ENCODE measurements at regions of chr7 and their contacts with region 1.

Region 1: DNA sequence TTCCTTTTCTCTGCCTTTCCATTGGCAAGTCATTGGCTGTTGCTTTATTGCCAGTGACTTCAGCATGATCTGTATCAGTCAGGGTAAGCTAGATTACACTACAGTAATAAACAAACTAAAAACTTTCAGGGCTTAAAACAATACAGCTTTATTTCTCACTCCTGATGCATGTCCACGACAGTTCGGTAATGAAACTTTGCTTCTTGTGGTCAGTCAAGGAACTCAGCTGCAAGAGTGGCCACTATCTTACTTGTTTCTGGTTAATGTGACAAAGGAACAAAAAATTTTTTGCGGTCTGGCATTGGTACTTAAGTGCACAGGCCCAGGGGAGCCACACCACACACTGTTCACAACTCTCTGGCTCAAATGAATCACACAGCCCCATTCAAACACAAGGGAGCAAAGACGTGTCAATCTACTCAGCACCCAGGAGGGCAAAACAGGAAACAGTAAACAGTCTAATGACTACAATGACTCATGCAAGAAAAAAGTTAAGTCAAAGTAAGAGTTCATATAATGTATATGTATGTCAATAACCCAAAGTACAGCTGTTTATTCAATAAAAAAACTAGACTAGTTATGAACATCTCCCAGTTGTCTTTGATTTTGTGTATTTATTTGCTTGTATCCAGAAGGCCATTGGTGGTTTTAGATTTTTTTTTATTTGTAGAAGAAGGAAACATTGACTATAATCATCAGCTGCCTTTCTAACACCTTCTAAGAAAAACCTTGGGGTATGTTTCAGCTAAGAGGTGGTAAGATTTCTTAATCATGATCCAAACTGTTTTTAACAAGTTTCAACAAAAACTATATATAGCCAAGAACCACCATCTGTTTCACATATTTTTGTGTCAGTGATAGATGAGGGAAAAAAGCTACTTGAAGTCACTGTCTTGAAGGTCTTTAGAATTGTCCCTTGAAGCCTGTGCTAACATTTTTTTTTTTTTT is 134.4 kb upstream of the FAM3C start:
- DNase-seq: peak; percentile 89
- H3K4me3 Mint-ChIP-seq: peak overlapping the region; percentile 63
- H3K27ac Mint-ChIP-seq: peak overlapping the region; percentile 96
- H3K4me1 Mint-ChIP-seq: peaks cover 47% of the 10 kb centered on the region
- H3K27me3 Mint-ChIP-seq: no peaks in the 10 kb centered on the region

Region 2: DNA sequence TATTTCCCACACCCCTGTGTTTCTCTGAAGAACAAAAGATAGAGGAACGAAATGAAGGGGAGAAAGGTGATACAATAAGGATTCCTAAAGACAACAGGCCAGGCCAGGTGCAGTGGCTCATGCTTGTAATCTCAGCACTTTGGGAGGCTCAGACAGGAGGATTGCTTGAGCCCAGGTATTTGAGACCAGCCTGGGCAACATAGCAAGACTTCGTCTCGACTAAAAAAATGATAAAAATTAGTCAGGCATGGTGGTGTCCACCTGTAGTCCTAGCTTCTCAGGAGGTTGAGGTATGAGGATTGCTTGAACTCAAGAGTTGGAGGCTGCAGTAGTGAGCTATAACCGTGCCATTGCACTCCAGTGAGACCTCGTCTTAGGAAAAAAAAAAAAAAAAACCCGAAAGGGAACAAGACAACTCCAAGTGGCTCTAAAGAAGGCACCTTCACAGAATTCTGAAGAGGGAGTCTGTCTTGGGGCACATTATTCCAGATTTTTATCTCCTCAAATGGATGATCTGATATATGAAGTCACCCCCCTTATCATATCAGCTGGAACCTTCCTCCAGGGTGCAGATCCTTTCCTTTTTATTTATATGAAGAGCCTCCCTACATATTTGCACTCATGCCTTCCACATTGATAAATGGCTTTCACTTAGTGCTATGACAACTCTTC is 92.9 kb before region 1 on chr7:
- intact Hi-C with region 1: loop called (anchors 1 kb)
- DNase-seq: no peak
- H3K4me3 Mint-ChIP-seq: peak overlapping the region; percentile 73
- H3K27ac Mint-ChIP-seq: peak overlapping the region; percentile 92
- H3K4me1 Mint-ChIP-seq: peaks cover 36% of the 10 kb centered on the region
- H3K27me3 Mint-ChIP-seq: no peaks in the 10 kb centered on the region

Region 3: DNA sequence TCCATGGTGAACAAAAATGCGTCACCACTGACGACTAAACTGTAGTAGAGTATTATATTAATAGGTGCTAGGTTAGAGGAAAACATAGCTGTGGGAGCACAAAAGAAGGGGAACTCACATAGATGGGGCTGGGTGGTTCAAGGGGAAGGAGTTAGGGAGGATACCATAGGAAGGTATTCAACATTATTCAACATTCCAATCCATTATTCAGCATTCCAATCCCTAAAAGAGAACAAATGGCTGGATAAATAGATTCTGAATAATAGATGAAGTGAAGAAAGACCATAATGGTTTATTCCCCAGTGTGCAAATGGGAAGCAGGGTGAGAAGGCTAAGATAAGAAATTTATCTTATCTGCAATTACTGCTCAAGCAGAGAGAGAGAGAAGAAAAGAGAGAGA is 552.2 kb after region 1 on chr7:
- intact Hi-C with region 1: no loop called
- DNase-seq: no peak
- H3K4me3 Mint-ChIP-seq: no peak overlapping the region
- H3K27ac Mint-ChIP-seq: no peak overlapping the region
- H3K4me1 Mint-ChIP-seq: no peaks in the 10 kb centered on the region
- H3K27me3 Mint-ChIP-seq: no peaks in the 10 kb centered on the region